Natural killer cell (primary cell): ENCODE measurements at regions of chr6 and their contacts with region 1.

Region 1: GRCh38 chr6:158819213-158819909 is at the start of gene EZR:
- DNase-seq: peak; percentile 68 to 94
- ATAC-seq: peak; percentile 55 to 75 (median 70)
- H3K4me3 ChIP-seq: peak within 1 kb of the TSS; percentile 93
- H3K4me3 Mint-ChIP-seq: peak within 1 kb of the TSS; percentile 96
- H3K27ac ChIP-seq: peak within 1 kb of the TSS; percentile 98
- H3K27ac Mint-ChIP-seq: peak within 1 kb of the TSS; percentile 93 to 95
- H3K4me1 ChIP-seq: peaks cover 35% of the 10 kb centered on the region
- H3K4me1 Mint-ChIP-seq: peaks cover 49 to 51% of the 10 kb centered on the region in 2 donors
- H3K27me3 ChIP-seq: no peaks in the 10 kb centered on the region
- H3K27me3 Mint-ChIP-seq: no peaks in the 10 kb centered on the region
- CTCF ChIP-seq: no peak
- total RNA-seq, gene EZR: 119 to 157 (median 133) TPM

Region 2: DNA sequence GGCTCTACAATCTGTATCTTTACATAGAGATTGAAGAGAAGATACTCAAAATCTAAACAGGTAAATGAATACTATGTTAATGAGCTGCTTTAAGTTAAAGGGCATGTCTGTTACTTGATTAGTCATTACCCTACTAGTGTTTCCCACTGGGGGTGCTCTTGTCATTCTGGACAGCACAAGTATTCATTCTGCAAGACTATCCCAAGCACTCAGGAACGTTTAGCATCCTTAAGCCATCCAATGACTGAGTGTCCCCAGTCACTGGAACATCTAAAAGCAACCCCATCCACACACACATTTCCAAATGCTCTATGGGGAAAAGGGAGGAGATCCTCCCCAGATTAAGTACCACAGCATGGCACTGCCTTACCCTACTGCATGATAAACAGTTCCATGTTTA is 25.9 kb before region 1 on chr6:
- intact Hi-C with region 1: loop called (anchors 2 kb)
- DNase-seq: peak in 1 of 2 donors; percentile 69
- ATAC-seq: peak in 2 of 3 donors; percentile 46 to 55
- H3K4me3 ChIP-seq: no peak overlapping the region
- H3K4me3 Mint-ChIP-seq: no peak overlapping the region
- H3K27ac ChIP-seq: no peak overlapping the region
- H3K27ac Mint-ChIP-seq: peak overlapping the region in 1 of 2 donors; percentile 29
- H3K4me1 ChIP-seq: peaks cover 52% of the 10 kb centered on the region
- H3K4me1 Mint-ChIP-seq: peaks cover 60 to 72% of the 10 kb centered on the region in 2 donors
- H3K27me3 ChIP-seq: no peaks in the 10 kb centered on the region
- H3K27me3 Mint-ChIP-seq: no peaks in the 10 kb centered on the region
- CTCF ChIP-seq: peak; percentile 50

Region 3: DNA sequence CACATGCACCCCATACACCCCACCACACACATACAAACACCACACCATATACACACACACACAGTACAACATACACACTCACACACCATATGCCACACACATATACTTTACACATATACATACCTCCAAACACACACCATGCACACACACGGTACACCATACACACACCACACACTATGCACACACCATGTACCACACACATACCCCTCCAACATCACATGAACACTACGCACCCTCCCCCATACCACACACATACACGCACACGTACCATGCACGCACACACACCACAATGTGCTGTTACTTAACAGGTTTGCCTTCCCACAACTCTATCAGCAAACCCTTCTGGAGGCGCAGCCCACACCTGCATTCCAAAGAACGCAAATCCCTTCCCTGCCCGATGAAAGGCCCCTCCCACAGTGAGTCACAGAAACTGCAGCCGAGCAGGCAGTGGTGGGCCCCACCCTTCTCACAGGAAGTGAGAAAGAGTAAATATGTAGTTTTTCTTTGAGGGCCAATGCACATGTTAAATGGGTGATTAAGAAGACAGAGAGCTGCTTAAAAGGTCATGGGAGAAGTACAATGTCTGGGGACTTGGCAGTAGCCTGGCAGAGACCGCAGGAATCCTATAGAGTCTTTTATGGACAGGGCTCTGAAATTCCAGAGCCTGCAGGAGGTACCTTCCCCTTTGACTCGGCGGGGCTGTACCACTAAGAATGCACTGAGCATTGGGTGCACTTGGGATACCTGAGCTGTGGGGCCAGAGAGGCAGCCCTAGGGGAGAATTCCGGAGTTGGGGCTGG is 33.9 kb after region 1 on chr6:
- intact Hi-C with region 1: loop called (anchors 1 kb)
- DNase-seq: peak; percentile 77 to 93
- ATAC-seq: peak; percentile 65 to 86 (median 73)
- H3K4me3 ChIP-seq: peak overlapping the region; percentile 22
- H3K4me3 Mint-ChIP-seq: no peak overlapping the region
- H3K27ac ChIP-seq: peak overlapping the region; percentile 91
- H3K27ac Mint-ChIP-seq: no peak overlapping the region
- H3K4me1 ChIP-seq: peaks cover 64% of the 10 kb centered on the region
- H3K4me1 Mint-ChIP-seq: peaks cover 25 to 27% of the 10 kb centered on the region in 2 donors
- H3K27me3 ChIP-seq: no peaks in the 10 kb centered on the region
- H3K27me3 Mint-ChIP-seq: no peaks in the 10 kb centered on the region
- CTCF ChIP-seq: no peak

Region 4: GRCh38 chr6:158869826-158870648 is 50.7 kb after region 1 on chr6:
- intact Hi-C with region 1: loop called (anchors 1 kb)
- DNase-seq: peak; percentile 83 to 98
- ATAC-seq: peak; percentile 73 to 91 (median 80)
- H3K4me3 ChIP-seq: peak overlapping the region; percentile 47
- H3K4me3 Mint-ChIP-seq: peak overlapping the region; percentile 92
- H3K27ac ChIP-seq: peak overlapping the region; percentile 90
- H3K27ac Mint-ChIP-seq: peak overlapping the region; percentile 98 to 100
- H3K4me1 ChIP-seq: peaks cover 30% of the 10 kb centered on the region
- H3K4me1 Mint-ChIP-seq: peaks cover 34 to 39% of the 10 kb centered on the region in 2 donors
- H3K27me3 ChIP-seq: no peaks in the 10 kb centered on the region
- H3K27me3 Mint-ChIP-seq: peaks cover 2 to 7% of the 10 kb centered on the region in 2 donors
- CTCF ChIP-seq: no peak

Region 5: GRCh38 chr6:158910484-158911348 is 91.4 kb after region 1 on chr6:
- intact Hi-C with region 1: loop called (anchors 5 kb)
- DNase-seq: peak in 1 of 2 donors; percentile 48
- ATAC-seq: peak; percentile 45 to 60 (median 49)
- H3K4me3 ChIP-seq: peak overlapping the region; percentile 0
- H3K4me3 Mint-ChIP-seq: peak overlapping the region; percentile 76
- H3K27ac ChIP-seq: peak overlapping the region; percentile 81
- H3K27ac Mint-ChIP-seq: peak overlapping the region; percentile 58 to 86
- H3K4me1 ChIP-seq: peaks cover 43% of the 10 kb centered on the region
- H3K4me1 Mint-ChIP-seq: peaks cover 32 to 49% of the 10 kb centered on the region in 2 donors
- H3K27me3 ChIP-seq: no peaks in the 10 kb centered on the region
- H3K27me3 Mint-ChIP-seq: peaks cover 0 to 3% of the 10 kb centered on the region in 2 donors
- CTCF ChIP-seq: no peak

Region 6: GRCh38 chr6:159399751-159400221 is 580.4 kb after region 1 on chr6:
- intact Hi-C with region 1: no loop called
- DNase-seq: no peak
- ATAC-seq: no peak
- H3K4me3 ChIP-seq: no peak overlapping the region
- H3K4me3 Mint-ChIP-seq: no peak overlapping the region
- H3K27ac ChIP-seq: no peak overlapping the region
- H3K27ac Mint-ChIP-seq: no peak overlapping the region
- H3K4me1 ChIP-seq: no peaks in the 10 kb centered on the region
- H3K4me1 Mint-ChIP-seq: no peaks in the 10 kb centered on the region
- H3K27me3 ChIP-seq: peaks cover 4% of the 10 kb centered on the region
- H3K27me3 Mint-ChIP-seq: peaks cover 1 to 4% of the 10 kb centered on the region in 2 donors
- CTCF ChIP-seq: no peak